Activated B cell treated with CpG ODN at 0.5 μM for 24 hours (primary cell): ENCODE measurements at regions of chr5 and their contacts with region 1.

Region 1: GRCh38 chr5:139593716-139594319 is 32.7 kb downstream of the UBE2D2 start:
- DNase-seq: no peak
- ATAC-seq: no peak
- H3K4me3 Mint-ChIP-seq: no peak overlapping the region
- H3K27ac Mint-ChIP-seq: no peak overlapping the region
- H3K4me1 Mint-ChIP-seq: peaks cover 72% of the 10 kb centered on the region
- H3K27me3 Mint-ChIP-seq: no peaks in the 10 kb centered on the region
- CTCF ChIP-seq: no peak

Region 2: GRCh38 chr5:139470821-139471300 is 123.0 kb before region 1 on chr5 and contains the start of gene SMIM33:
- CTCF ChIA-PET with region 1: no interaction called
- POLR2A ChIA-PET with region 1: interaction called, 12 read pairs
- intact Hi-C with region 1: no loop called
- DNase-seq: no peak
- ATAC-seq: peak; percentile 54
- H3K4me3 Mint-ChIP-seq: peak within 1 kb of the TSS; percentile 45
- H3K27ac Mint-ChIP-seq: no peak within 1 kb of the TSS
- H3K4me1 Mint-ChIP-seq: peaks cover 14% of the 10 kb centered on the region
- H3K27me3 Mint-ChIP-seq: peaks cover 15% of the 10 kb centered on the region
- CTCF ChIP-seq: no peak
- total RNA-seq, gene SMIM33: not detected in 2 replicates

Region 3: DNA sequence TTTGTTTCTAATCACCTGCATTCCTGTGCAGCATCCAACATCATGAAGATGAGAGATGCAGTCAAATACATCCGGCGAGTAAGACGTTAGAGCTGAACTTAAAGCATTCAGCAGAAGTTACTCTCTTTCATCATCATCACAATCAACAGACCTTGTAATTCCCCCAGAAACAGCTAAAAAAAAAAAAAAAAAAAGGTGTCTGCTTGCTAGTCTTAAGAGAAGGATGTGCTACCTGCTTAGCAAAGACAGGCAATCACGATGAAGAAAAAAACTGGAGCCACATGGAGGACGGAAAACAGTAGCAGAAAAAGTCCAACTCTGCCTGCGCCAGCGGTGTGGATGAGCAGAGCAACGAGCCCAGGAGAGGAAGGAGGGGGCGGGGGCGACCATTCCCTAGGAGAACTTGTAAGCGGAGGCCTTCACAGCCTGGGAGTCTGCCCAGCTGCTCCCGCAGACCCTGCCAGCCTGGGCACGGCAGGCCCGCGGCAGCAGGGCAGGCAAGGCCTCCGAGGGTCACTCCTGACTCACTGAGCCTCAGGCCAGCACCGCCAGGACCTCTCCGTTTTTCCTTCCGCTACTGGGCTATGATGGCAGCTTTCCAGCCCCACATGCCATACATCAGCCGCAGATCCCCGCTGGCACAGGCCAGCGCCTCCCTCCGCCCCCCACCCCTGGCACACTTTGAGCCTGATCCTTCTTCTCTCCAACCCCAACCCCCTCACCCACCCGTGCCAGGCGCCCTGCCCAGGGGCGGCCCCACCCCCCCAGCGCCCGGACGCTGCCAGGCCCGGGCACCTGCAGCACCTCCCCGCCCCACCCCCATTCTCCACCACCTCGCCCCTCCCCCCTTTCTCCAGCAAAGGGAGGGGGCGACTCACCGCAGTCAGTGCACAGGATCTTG is 447.9 kb after region 1 on chr5:
- CTCF ChIA-PET with region 1: no interaction called
- POLR2A ChIA-PET with region 1: no interaction called
- intact Hi-C with region 1: no loop called
- DNase-seq: no peak
- ATAC-seq: no peak
- H3K4me3 Mint-ChIP-seq: peak overlapping the region; percentile 76
- H3K27ac Mint-ChIP-seq: no peak overlapping the region
- H3K4me1 Mint-ChIP-seq: peaks cover 32% of the 10 kb centered on the region
- H3K27me3 Mint-ChIP-seq: peaks cover 46% of the 10 kb centered on the region
- CTCF ChIP-seq: no peak